CD8-positive, alpha-beta T cell (primary cell): ENCODE measurements at regions of chr9 and their contacts with region 1.

Region 1: GRCh38 chr9:9625248-9625647 is 987.6 kb downstream of the PTPRD start:
- DNase-seq: no peak
- ATAC-seq: no peak
- H3K4me3 ChIP-seq: no peak overlapping the region
- H3K4me3 Mint-ChIP-seq: no peak overlapping the region
- H3K27ac ChIP-seq: no peak overlapping the region
- H3K27ac Mint-ChIP-seq: no peak overlapping the region
- H3K4me1 ChIP-seq: no peaks in the 10 kb centered on the region
- H3K4me1 Mint-ChIP-seq: no peaks in the 10 kb centered on the region
- H3K27me3 ChIP-seq: no peaks in the 10 kb centered on the region
- H3K27me3 Mint-ChIP-seq: no peaks in the 10 kb centered on the region
- CTCF ChIP-seq: no peak

Region 2: GRCh38 chr9:9574080-9574479 is 51.2 kb before region 1 on chr9:
- CTCF ChIA-PET with region 1: no interaction called
- POLR2A ChIA-PET with region 1: no interaction called
- intact Hi-C with region 1: loop called in 1 of 2 experiments (anchors 5 kb)
- DNase-seq: no peak
- ATAC-seq: no peak
- H3K4me3 ChIP-seq: no peak overlapping the region
- H3K4me3 Mint-ChIP-seq: no peak overlapping the region
- H3K27ac ChIP-seq: no peak overlapping the region
- H3K27ac Mint-ChIP-seq: no peak overlapping the region
- H3K4me1 ChIP-seq: no peaks in the 10 kb centered on the region
- H3K4me1 Mint-ChIP-seq: no peaks in the 10 kb centered on the region
- H3K27me3 ChIP-seq: no peaks in the 10 kb centered on the region
- H3K27me3 Mint-ChIP-seq: no peaks in the 10 kb centered on the region
- CTCF ChIP-seq: no peak